ENCODE measurements at regions of chr1 and their contacts with region 1.

Region 1: GRCh38 chr1:1890506-1891348 is at the start of gene GNB1:
- DNase-seq: peak; percentile 89 to 95 (median 90)
- ATAC-seq: peak; percentile 48 to 87 (median 86)
- H3K4me3 ChIP-seq: peak within 1 kb of the TSS; percentile 87 to 100 (median 96)
- H3K27ac ChIP-seq: peak within 1 kb of the TSS; percentile 90 to 98 (median 96)
- H3K4me1 ChIP-seq: peaks cover 0 to 74% (median 58%) of the 10 kb centered on the region in 12 donors
- H3K27me3 ChIP-seq: peaks cover 0 to 4% (median 0%) of the 10 kb centered on the region in 9 donors
- CTCF ChIP-seq: no peak
- POLR2A ChIP-seq: peak in 1 of 2 donors; percentile 68
- total RNA-seq, gene GNB1: 83.8 to 275 (median 172) TPM

Region 2: DNA sequence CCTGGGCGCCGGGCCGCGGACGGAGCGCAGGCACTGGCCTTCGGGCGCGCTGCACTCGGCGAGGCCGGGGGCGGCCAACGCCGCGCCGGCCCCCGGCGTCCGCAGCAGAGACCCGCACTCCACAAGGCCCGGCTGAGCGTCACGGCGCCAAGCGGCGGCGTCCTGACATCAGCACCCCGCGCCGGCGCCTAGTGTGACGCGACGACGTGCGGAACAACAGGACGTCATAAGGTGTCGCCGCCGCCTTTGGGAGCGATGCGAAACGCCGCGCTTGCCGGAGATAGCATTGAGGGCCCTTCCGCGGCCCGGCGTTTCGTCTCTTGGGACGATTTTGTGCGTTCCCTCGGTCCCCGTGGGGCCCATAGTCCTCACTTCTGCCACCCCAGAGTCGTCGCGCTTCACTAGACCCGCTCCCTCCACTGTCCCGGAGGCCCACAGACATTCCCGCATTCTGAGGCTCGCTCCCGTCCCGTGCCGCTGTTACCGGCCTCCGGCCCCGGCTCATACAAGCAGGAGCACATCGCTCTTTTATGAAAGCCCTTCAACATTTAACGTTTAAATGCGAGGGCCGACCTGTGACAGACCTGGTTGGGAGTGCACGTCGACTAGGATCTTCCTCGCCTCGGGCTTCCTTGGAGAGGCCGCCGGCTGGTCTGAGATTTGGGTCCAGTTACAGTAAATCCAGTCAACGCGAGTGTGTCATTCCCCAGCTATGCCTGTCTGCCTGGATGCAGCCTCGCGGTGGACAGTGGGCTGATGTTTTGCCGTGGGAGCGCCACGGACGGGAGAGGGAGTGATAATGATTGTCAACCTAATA is 315.8 kb before region 1 on chr1 and contains the start of gene SSU72:
- intact Hi-C with region 1: no loop called
- DNase-seq: peak; percentile 93 to 96 (median 94)
- ATAC-seq: peak; percentile 91 to 96 (median 95)
- H3K4me3 ChIP-seq: peak within 1 kb of the TSS; percentile 73 to 100 (median 99)
- H3K27ac ChIP-seq: peak within 1 kb of the TSS; percentile 90 to 100 (median 98)
- H3K4me1 ChIP-seq: peaks cover 0 to 41% (median 22%) of the 10 kb centered on the region in 12 donors
- H3K27me3 ChIP-seq: peaks cover 0 to 4% (median 0%) of the 10 kb centered on the region in 9 donors
- CTCF ChIP-seq: no peak
- POLR2A ChIP-seq: peak; percentile 41 to 79
- total RNA-seq, gene SSU72: 76.3 to 160 (median 106) TPM

Region 3: GRCh38 chr1:1777950-1778662 is 112.6 kb before region 1 on chr1 and contains the start of gene NADK:
- intact Hi-C with region 1: loop called in 5 of 10 experiments (anchors 2 to 10 kb)
- DNase-seq: peak; percentile 61 to 85 (median 68)
- ATAC-seq: peak; percentile 19 to 62 (median 42)
- H3K4me3 ChIP-seq: peak within 1 kb of the TSS; percentile 71 to 92 (median 82)
- H3K27ac ChIP-seq: peak within 1 kb of the TSS; percentile 87 to 97 (median 94)
- H3K4me1 ChIP-seq: peaks cover 7 to 82% (median 65%) of the 10 kb centered on the region in 12 donors
- H3K27me3 ChIP-seq: no peaks in the 10 kb centered on the region
- CTCF ChIP-seq: peak in 1 of 12 donors; percentile 20
- POLR2A ChIP-seq: peak in 1 of 2 donors; percentile 40
- total RNA-seq, gene NADK: 17.7 to 45.2 (median 23.3) TPM

Region 4: DNA sequence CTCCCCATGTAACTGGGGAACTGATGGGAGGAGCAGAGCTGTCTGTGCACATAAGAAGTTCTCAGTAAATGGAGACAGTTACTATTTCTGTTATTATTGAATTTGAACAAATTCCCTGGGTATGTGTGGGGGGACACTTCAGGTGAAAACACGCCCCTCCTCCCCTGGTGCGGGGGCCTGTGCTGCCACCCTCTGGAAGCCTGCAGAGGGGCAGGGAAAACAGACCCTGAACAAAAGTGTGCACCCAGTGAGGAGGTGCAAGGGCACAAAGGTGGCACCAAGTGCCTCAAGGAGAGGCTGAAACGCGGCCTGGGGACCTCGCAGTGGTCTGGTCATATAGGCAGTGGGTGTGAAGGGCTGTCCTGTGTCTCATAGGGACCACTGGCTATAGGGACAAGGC is 94.3 kb before region 1 on chr1:
- intact Hi-C with region 1: loop called in 1 of 10 experiments (anchors 10 kb)
- DNase-seq: peak in 1 of 5 donors; percentile 30
- ATAC-seq: no peak
- H3K4me3 ChIP-seq: no peak overlapping the region
- H3K27ac ChIP-seq: no peak overlapping the region
- H3K4me1 ChIP-seq: peaks cover 0 to 18% (median 10%) of the 10 kb centered on the region in 12 donors
- H3K27me3 ChIP-seq: no peaks in the 10 kb centered on the region
- CTCF ChIP-seq: peak in 6 of 12 donors; percentile 6 to 24 (median 18)
- POLR2A ChIP-seq: no peak

Region 5: GRCh38 chr1:1833916-1834325 is 56.8 kb before region 1 on chr1:
- intact Hi-C with region 1: loop called in 1 of 10 experiments (anchors 10 kb)
- DNase-seq: no peak
- ATAC-seq: peak in 2 of 4 donors; percentile 18 to 19
- H3K4me3 ChIP-seq: no peak overlapping the region
- H3K27ac ChIP-seq: peak overlapping the region in 3 of 12 donors; percentile 17 to 49 (median 41)
- H3K4me1 ChIP-seq: peaks cover 5 to 38% (median 28%) of the 10 kb centered on the region in 12 donors
- H3K27me3 ChIP-seq: no peaks in the 10 kb centered on the region
- CTCF ChIP-seq: no peak
- POLR2A ChIP-seq: no peak

Region 6: GRCh38 chr1:1841575-1841995 is 49.1 kb before region 1 on chr1:
- intact Hi-C with region 1: loop called in 4 of 10 experiments (anchors 5 to 10 kb)
- DNase-seq: no peak
- ATAC-seq: no peak
- H3K4me3 ChIP-seq: no peak overlapping the region
- H3K27ac ChIP-seq: peak overlapping the region in 3 of 12 donors; percentile 5 to 65 (median 9)
- H3K4me1 ChIP-seq: peaks cover 11 to 75% (median 59%) of the 10 kb centered on the region in 12 donors
- H3K27me3 ChIP-seq: no peaks in the 10 kb centered on the region
- CTCF ChIP-seq: peak in 2 of 12 donors; percentile 19 to 27
- POLR2A ChIP-seq: no peak

Region 7: DNA sequence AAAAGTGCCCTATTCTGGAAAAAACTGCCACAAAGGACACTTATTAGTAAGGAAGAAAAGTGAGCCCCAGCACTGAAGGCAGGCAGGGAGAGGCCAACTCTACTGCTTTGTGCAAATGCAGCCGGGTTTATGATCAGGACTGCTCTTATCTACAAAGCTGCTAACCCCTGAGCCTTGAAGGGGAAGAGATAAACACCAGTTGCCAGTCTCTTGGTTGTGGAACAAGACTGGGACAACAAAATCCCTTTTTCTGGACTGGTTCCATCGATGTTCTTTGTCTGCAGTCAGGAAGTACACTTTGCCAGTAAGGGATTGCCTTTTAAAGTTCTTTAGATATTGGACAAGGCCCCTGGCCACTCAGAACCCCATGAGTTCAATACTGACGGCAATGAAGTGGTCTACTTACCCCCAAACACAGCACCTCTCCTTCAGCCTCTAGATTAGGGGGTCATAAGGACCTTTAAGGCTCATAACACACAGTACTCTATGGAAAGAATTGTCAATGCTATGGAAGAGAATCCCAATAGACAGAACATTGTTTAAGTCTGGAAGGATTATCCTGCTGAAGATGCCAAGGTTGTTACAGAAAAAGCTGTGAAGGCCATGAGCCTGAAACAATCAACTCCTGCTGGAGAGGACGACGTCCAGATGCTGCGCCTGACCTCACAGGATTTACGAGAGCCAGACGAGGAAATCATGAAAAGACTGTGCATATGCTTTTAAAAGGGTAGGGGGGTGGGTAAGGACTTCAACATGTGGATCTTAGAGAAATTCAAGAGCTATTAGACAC is 43.5 kb before region 1 on chr1:
- intact Hi-C with region 1: loop called in 3 of 10 experiments (anchors 5 to 10 kb)
- DNase-seq: no peak
- ATAC-seq: peak; percentile 54 to 87 (median 68)
- H3K4me3 ChIP-seq: no peak overlapping the region
- H3K27ac ChIP-seq: peak overlapping the region in 11 of 12 donors; percentile 28 to 78 (median 57)
- H3K4me1 ChIP-seq: peaks cover 21 to 75% (median 60%) of the 10 kb centered on the region in 12 donors
- H3K27me3 ChIP-seq: no peaks in the 10 kb centered on the region
- CTCF ChIP-seq: no peak
- POLR2A ChIP-seq: no peak

Region 8: DNA sequence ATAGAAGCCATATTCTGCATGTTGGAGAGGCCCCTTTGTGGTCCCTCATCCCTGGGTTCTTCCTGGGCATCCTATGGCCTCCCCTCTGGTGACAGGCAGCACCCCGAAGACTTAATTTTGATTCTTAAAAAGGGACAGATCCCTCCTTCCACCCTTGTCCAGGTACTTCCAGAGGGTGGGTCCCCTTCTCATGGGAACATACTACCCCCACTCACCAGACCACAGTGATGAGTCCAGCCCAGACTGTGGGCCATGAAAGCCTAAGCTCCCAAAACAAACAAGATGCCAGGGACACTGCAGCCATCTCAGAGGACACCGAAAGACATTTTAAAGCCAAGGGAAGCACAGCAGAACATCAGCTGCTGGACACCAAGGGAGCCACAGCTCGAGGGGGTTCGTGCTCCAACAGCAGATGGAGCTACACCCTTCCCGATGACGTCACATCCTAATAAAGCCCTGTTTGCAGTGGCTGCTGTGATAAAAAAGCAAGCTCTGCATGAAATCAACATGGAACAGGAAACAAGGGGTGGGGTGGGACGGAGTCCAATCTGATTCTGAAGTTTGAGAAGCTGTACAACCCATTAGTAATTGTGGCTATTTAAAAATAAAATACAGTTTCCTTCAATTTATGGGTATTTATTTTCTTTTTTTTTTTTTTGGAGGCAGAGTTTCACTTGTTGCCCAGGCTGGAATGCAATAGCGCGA is 32.2 kb before region 1 on chr1:
- intact Hi-C with region 1: loop called in 7 of 10 experiments (anchors 2 to 5 kb)
- DNase-seq: peak; percentile 73 to 92 (median 89)
- ATAC-seq: peak; percentile 77 to 94 (median 90)
- H3K4me3 ChIP-seq: peak overlapping the region in 9 of 12 donors; percentile 14 to 38 (median 35)
- H3K27ac ChIP-seq: peak overlapping the region; percentile 73 to 89 (median 83)
- H3K4me1 ChIP-seq: peaks cover 20 to 95% (median 78%) of the 10 kb centered on the region in 12 donors
- H3K27me3 ChIP-seq: no peaks in the 10 kb centered on the region
- CTCF ChIP-seq: peak in 11 of 12 donors; percentile 17 to 80 (median 53)
- POLR2A ChIP-seq: no peak

Region 9: GRCh38 chr1:2019172-2019543 is 128.4 kb after region 1 on chr1 and contains the start of gene GABRD:
- intact Hi-C with region 1: no loop called
- DNase-seq: no peak
- ATAC-seq: no peak
- H3K4me3 ChIP-seq: peak within 1 kb of the TSS in 8 of 12 donors; percentile 15 to 47 (median 37)
- H3K27ac ChIP-seq: no peak within 1 kb of the TSS
- H3K4me1 ChIP-seq: peaks cover 0 to 16% (median 0%) of the 10 kb centered on the region in 12 donors
- H3K27me3 ChIP-seq: peaks cover 17 to 63% (median 50%) of the 10 kb centered on the region in 9 donors
- CTCF ChIP-seq: no peak
- POLR2A ChIP-seq: no peak
- total RNA-seq, gene GABRD: 0.21 to 1.1 (median 0.61) TPM in 7 of 9 donors, not detected in the others